ENCODE measurements at regions of chr1 and their contacts with region 1.

Region 1: DNA sequence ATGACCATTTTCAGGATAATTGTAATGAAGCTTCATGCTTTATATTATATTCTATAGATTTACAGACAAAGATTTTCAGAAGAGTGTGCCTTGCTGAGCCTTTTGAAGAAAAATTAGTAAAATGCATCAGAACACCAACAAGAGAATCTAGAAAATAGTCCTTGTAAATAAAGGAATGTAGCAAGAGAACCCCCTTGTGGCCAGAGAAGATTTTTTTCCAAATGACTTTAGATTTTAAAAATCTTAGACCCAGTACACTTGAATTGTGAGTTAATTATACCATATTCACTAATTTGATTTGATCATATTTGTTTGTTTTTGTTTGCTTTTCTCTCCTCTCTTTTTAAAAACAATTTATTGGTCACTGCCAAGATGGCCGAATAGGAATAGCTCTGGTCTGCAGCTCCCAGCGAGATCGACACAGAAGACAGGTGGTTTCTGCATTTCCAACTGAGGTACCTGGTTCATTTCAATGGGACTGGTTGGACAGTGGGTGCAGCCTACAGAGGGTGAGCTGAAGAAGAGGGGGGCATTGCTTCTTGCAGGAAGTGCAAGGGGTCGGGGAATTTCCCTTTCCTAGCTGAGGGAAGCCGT is 12.8 kb upstream of the IFI44L start:
- DNase-seq: no peak
- H3K4me3 ChIP-seq: no peak overlapping the region
- H3K27ac ChIP-seq: no peak overlapping the region
- H3K27me3 ChIP-seq: peaks cover 0 to 7% (median 0%) of the 10 kb centered on the region in 45 donors
- CTCF ChIP-seq: peak; percentile 42 to 81 (median 66)

Region 2: DNA sequence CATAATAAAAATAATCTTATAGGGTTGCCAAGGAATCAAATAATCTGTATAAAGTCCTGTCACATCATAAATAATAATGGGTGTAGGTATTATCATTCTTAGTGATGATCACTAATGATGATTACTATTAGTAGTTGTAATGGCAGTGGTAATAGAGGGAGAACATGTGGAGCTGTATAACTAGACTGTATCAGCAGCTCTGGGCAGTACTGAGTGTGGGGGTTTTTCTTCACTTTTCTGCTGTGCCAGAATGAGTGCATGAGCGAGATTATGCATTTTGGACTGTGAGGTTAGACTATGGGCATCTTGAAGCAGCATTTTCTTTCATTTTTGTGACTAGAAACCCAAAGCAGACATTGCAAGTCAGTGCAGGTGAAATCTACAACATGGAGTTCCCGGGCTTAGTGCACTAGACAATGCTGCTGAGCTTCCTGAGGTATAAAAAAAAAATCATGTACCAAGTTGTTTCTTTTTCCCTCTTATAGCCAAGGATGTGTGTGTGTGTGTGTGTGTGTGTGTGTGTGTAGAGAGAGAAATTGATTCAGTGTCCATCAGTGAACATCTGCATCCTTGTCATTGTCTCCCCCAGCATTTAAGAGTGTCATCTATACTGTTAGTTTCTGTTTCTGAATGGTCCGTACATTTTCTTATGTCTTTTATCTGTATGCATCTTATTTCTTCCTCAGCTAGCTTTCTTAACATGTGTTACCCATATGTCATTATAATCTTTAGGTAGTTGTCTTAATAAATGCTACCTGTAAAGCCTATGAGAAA is 475.1 kb before region 1 on chr1:
- intact Hi-C with region 1: loop called (anchors 5 kb)
- DNase-seq: no peak
- H3K4me3 ChIP-seq: no peak overlapping the region
- H3K27ac ChIP-seq: no peak overlapping the region
- H3K27me3 ChIP-seq: no peaks in the 10 kb centered on the region
- CTCF ChIP-seq: no peak

Region 3: DNA sequence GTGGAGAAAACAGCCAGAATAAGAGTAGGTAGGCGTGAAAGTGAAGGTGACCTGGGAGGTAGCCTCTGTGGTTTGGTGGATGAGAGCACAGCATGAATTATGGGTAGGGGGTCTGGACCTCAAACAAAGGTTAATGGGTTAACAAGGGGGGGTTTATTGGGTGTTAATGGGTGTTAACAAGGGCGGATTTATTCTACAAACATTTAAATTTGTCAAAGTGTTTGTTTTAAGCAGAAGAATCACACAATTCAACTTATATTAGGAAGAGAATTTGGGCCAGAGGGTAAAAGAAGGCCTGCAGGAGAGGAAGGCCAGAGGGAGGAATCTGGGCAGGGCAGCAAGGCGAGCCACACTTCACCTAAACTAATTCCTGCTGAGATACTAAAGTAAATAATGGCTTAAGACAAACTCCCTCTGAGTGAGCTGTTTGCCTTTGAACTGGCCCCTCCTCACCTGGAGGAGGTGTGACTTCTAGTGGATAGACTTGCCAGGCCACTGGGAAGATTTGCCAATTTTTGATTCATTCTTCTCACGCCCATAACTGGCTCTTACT is 370.0 kb before region 1 on chr1:
- intact Hi-C with region 1: no loop called
- DNase-seq: no peak
- H3K4me3 ChIP-seq: no peak overlapping the region
- H3K27ac ChIP-seq: no peak overlapping the region
- H3K27me3 ChIP-seq: peaks cover 0 to 10% (median 0%) of the 10 kb centered on the region in 45 donors
- CTCF ChIP-seq: no peak

Region 4: GRCh38 chr1:78561856-78562255 is 45.6 kb before region 1 on chr1:
- intact Hi-C with region 1: no loop called
- DNase-seq: no peak
- H3K4me3 ChIP-seq: no peak overlapping the region
- H3K27ac ChIP-seq: no peak overlapping the region
- H3K27me3 ChIP-seq: no peaks in the 10 kb centered on the region
- CTCF ChIP-seq: no peak

Region 5: DNA sequence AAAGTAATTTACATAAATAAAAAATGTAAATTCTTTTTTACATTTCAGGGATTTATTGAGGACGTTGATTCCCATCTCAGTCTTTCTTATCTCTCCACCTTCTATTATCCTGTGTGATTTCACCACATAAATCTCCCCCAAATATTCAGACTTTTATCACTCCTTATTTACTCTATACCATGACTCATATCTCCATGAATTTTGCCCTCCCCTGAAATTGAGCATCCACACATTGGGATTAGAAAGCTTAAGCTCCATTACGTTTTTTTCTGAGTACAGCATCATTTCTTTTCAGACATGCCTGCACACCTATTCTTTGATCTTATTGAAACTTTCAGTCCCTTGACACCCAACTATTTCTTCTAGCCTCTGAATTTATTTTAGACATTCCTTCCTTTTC is 153.4 kb after region 1 on chr1:
- intact Hi-C with region 1: no loop called
- DNase-seq: no peak
- H3K4me3 ChIP-seq: no peak overlapping the region
- H3K27ac ChIP-seq: no peak overlapping the region
- H3K27me3 ChIP-seq: no peaks in the 10 kb centered on the region
- CTCF ChIP-seq: no peak